Activated naive CD4-positive, alpha-beta T cell treated with anti-CD3 and anti-CD28 coated beads for 36 hours (primary cell): ENCODE measurements at regions of chr14 and their contacts with region 1.

Region 1: GRCh38 chr14:66359500-66359899 is 126.7 kb upstream of the CCDC196 start:
- DNase-seq: peak; percentile 10
- H3K4me3 Mint-ChIP-seq: no peak overlapping the region
- H3K27ac Mint-ChIP-seq: no peak overlapping the region
- H3K4me1 Mint-ChIP-seq: no peaks in the 10 kb centered on the region
- H3K27me3 Mint-ChIP-seq: no peaks in the 10 kb centered on the region

Region 2: DNA sequence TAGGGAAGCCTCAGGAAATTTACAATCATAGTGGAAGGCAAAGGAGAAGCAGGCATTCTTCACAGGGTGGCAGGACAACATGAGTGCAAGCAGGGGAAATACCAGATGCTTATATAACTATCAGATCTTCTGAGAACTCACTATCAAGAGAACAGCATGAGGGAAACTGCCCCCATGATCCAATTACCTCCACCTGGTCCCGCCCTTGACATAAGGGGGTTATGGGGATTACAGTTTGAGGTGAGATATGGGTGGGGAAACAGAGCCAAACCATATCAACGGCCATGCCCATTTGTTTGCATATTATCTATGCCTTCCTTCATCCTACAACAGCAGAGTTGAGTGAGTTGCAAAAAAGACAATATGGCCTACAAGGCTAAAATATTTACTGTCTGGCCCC is 13.5 kb before region 1 on chr14:
- CTCF ChIA-PET with region 1: interaction called, 13 read pairs
- intact Hi-C with region 1: no loop called
- DNase-seq: no peak
- H3K4me3 Mint-ChIP-seq: no peak overlapping the region
- H3K27ac Mint-ChIP-seq: no peak overlapping the region
- H3K4me1 Mint-ChIP-seq: no peaks in the 10 kb centered on the region
- H3K27me3 Mint-ChIP-seq: no peaks in the 10 kb centered on the region

Region 3: DNA sequence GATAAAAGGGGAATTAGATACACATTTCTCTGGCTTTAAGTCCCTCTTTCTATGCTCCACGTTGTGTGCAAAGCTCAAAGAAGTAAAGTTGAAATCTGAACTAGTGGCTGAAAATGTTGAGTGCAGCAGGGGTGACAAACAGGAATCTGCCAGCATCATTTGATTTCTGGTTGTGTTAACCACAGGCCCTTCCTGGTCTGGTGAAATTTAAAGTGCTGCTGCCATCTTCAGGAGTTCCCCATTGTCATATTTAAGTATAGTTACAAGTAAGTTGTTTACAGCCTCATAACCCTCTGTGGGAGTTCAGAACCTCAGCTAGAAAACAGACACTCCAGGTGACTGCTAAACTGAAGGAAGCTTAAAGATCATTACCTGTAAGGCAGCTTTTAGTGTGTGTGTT is 35.8 kb after region 1 on chr14:
- CTCF ChIA-PET with region 1: interaction called, 38 read pairs
- intact Hi-C with region 1: loop called (anchors 1 kb)
- DNase-seq: peak; percentile 62
- H3K4me3 Mint-ChIP-seq: no peak overlapping the region
- H3K27ac Mint-ChIP-seq: no peak overlapping the region
- H3K4me1 Mint-ChIP-seq: peaks cover 12% of the 10 kb centered on the region
- H3K27me3 Mint-ChIP-seq: no peaks in the 10 kb centered on the region

Region 4: GRCh38 chr14:66495218-66496098 is 136.0 kb after region 1 on chr14:
- CTCF ChIA-PET with region 1: interaction called, 4 read pairs
- intact Hi-C with region 1: loop called (anchors 1 kb)
- DNase-seq: peak; percentile 56
- H3K4me3 Mint-ChIP-seq: no peak overlapping the region
- H3K27ac Mint-ChIP-seq: no peak overlapping the region
- H3K4me1 Mint-ChIP-seq: peaks cover 19% of the 10 kb centered on the region
- H3K27me3 Mint-ChIP-seq: no peaks in the 10 kb centered on the region

Region 5: GRCh38 chr14:66530526-66530925 is 171.0 kb after region 1 on chr14:
- CTCF ChIA-PET with region 1: no interaction called
- intact Hi-C with region 1: no loop called
- DNase-seq: no peak
- H3K4me3 Mint-ChIP-seq: no peak overlapping the region
- H3K27ac Mint-ChIP-seq: no peak overlapping the region
- H3K4me1 Mint-ChIP-seq: peaks cover 8% of the 10 kb centered on the region
- H3K27me3 Mint-ChIP-seq: no peaks in the 10 kb centered on the region

Region 6: DNA sequence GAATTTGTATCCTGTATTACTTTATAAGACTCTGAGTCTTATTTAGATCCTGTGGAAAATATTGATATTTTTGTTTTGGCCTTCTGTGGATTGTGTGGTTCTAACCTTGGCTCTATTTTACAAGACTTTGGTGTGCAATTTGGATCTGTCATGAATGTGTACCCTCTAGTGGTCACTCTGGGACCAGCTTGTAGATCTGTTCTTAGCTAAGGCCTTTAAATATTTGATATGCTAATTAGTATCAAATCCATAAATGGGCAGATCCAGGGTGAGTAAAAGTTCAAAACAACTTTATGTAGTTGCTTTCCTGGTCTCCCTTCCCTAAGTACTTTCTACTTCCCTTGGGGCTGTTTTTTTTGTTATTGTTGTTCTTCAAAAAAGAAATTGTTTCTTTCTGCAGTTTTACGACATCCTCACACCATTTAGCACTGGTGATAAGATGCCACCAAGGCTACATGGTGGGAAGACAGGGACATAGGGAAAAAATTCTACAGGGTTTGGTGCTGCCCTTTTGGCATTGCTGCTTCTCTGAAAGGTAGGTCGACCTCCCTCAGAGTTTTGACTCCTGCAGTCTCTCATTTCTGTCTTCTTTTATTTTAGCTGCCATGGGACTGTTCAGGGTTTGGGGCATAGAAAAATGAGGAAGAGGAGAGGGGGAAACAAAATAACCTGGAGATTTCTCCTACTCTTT is 387.0 kb after region 1 on chr14:
- CTCF ChIA-PET with region 1: no interaction called
- intact Hi-C with region 1: loop called (anchors 1 kb)
- DNase-seq: peak; percentile 6
- H3K4me3 Mint-ChIP-seq: no peak overlapping the region
- H3K27ac Mint-ChIP-seq: no peak overlapping the region
- H3K4me1 Mint-ChIP-seq: no peaks in the 10 kb centered on the region
- H3K27me3 Mint-ChIP-seq: no peaks in the 10 kb centered on the region